ENCODE measurements at regions of chr22 and their contacts with region 1.

Region 1: GRCh38 chr22:46122511-46122971 is 27.8 kb upstream of the PPARA start:
- DNase-seq: peak; percentile 77
- ATAC-seq: peak; percentile 82
- H3K4me3 Mint-ChIP-seq: no peak overlapping the region
- H3K27ac Mint-ChIP-seq: no peak overlapping the region
- H3K4me1 Mint-ChIP-seq: peaks cover 5% of the 10 kb centered on the region
- H3K27me3 Mint-ChIP-seq: no peaks in the 10 kb centered on the region

Region 2: GRCh38 chr22:45994491-45995404 is 127.8 kb before region 1 on chr22:
- CTCF ChIA-PET with region 1: interaction called, 39 read pairs
- POLR2A ChIA-PET with region 1: no interaction called
- DNase-seq: peak; percentile 83
- ATAC-seq: peak; percentile 66
- H3K4me3 Mint-ChIP-seq: no peak overlapping the region
- H3K27ac Mint-ChIP-seq: no peak overlapping the region
- H3K4me1 Mint-ChIP-seq: peaks cover 21% of the 10 kb centered on the region
- H3K27me3 Mint-ChIP-seq: peaks cover 6% of the 10 kb centered on the region

Region 3: DNA sequence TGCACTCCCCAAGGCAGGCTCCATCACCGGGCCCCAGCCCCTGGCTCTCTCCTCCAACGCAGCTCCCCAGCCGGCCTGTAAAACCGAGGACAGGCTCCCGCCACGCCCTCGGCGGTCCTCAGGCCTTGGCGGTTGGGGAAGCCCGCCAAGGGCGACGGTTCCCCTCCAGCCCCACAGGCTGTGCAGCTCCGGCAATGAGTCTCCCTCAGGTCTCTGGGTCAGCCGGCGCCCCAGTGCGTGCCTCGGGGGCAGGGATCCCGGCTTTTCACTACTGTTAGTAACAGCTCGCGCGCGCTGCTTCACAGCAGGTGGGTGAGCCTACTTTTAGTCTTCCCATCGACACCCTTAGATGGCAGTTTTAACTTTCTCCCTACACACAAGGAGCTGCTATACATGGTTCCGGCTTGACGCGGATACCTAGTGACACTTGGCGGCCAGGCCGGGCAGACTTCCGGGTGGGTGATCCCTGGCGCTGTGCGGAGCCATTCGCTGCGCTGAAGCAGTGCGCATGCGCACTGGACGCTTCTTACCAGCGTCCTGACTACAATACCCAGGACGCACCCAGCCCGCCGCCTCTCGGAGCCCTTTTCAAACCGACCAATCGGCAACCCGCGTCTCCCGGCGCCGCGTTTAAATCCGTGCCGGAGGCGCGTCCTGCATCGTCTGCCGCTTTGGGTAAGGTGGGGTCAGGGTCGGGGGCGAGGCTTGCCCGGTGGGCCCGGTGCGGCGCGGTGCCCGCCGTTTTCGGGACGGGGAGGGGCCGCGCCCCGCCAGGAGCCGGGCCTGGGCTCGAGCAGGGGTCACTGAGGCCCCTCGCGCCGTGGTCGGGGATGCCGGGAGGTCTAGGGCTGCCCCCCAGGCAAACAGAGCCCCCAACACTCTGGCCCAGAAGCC is 174.0 kb after region 1 on chr22 and contains the start of gene GTSE1:
- CTCF ChIA-PET with region 1: interaction called, 21 read pairs
- POLR2A ChIA-PET with region 1: no interaction called
- DNase-seq: peak; percentile 99
- ATAC-seq: peak; percentile 99
- H3K4me3 Mint-ChIP-seq: peak within 1 kb of the TSS; percentile 89
- H3K27ac Mint-ChIP-seq: peak within 1 kb of the TSS; percentile 97
- H3K4me1 Mint-ChIP-seq: peaks cover 67% of the 10 kb centered on the region
- H3K27me3 Mint-ChIP-seq: no peaks in the 10 kb centered on the region
- total RNA-seq, gene GTSE1: 111 to 114 TPM

Region 4: DNA sequence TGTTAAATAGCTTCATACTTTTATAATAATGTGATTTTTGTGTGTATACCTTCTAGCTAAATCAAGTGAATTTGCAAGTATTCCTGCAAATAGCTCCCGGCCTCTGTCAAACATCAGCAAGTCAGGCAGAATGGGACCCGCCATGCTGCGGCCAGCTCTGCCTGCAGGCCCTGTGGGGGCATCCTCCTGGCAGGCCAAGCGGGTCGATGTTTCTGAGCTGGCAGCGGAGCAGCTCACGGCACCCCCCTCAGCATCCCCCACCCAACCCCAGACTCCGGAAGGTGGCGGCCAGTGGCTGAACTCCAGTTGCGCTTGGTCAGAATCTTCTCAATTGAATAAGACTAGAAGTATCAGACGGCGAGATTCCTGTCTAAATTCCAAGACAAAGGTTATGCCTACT is 193.4 kb after region 1 on chr22:
- CTCF ChIA-PET with region 1: interaction called, 11 read pairs
- POLR2A ChIA-PET with region 1: no interaction called
- DNase-seq: no peak
- ATAC-seq: no peak
- H3K4me3 Mint-ChIP-seq: no peak overlapping the region
- H3K27ac Mint-ChIP-seq: no peak overlapping the region
- H3K4me1 Mint-ChIP-seq: no peaks in the 10 kb centered on the region
- H3K27me3 Mint-ChIP-seq: no peaks in the 10 kb centered on the region